ENCODE measurements at regions of chr1 and their contacts with region 1.

Region 1: GRCh38 chr1:41360993-41361753 is at the start of gene FOXO6:
- DNase-seq: peak; percentile 87 to 94 (median 91)
- ATAC-seq: peak; percentile 95
- H3K4me3 ChIP-seq: peak within 1 kb of the TSS; percentile 51
- H3K4me3 Mint-ChIP-seq: peak within 1 kb of the TSS; percentile 65 to 86 (median 80)
- H3K27ac ChIP-seq: peak within 1 kb of the TSS; percentile 25
- H3K27ac Mint-ChIP-seq: peak within 1 kb of the TSS in 7 of 9 donors; percentile 3 to 91 (median 73)
- H3K4me1 ChIP-seq: peaks cover 4 to 6% of the 10 kb centered on the region in 2 donors
- H3K4me1 Mint-ChIP-seq: peaks cover 4 to 28% (median 9%) of the 10 kb centered on the region in 7 donors
- H3K27me3 ChIP-seq: peaks cover 5 to 7% of the 10 kb centered on the region in 2 donors
- H3K27me3 Mint-ChIP-seq: peaks cover 10 to 58% (median 35%) of the 10 kb centered on the region in 5 donors
- total RNA-seq, gene FOXO6: 0.66 to 1.3 TPM in 2 of 5 experiments, not detected in the others

Region 2: GRCh38 chr1:40709100-40709801 is 651.9 kb before region 1 on chr1:
- CTCF ChIA-PET with region 1: no interaction called
- POLR2A ChIA-PET with region 1: no interaction called
- intact Hi-C with region 1: loop called in 1 of 2 experiments (anchors 10 kb)
- DNase-seq: peak; percentile 28 to 91 (median 88)
- ATAC-seq: peak; percentile 97
- H3K4me3 ChIP-seq: peak overlapping the region; percentile 68
- H3K4me3 Mint-ChIP-seq: peak overlapping the region; percentile 90 to 99 (median 94)
- H3K27ac ChIP-seq: peak overlapping the region; percentile 82
- H3K27ac Mint-ChIP-seq: peak overlapping the region; percentile 89 to 98 (median 93)
- H3K4me1 ChIP-seq: peaks cover 41 to 53% of the 10 kb centered on the region in 2 donors
- H3K4me1 Mint-ChIP-seq: peaks cover 40 to 78% (median 71%) of the 10 kb centered on the region in 7 donors
- H3K27me3 ChIP-seq: no peaks in the 10 kb centered on the region
- H3K27me3 Mint-ChIP-seq: no peaks in the 10 kb centered on the region

Region 3: DNA sequence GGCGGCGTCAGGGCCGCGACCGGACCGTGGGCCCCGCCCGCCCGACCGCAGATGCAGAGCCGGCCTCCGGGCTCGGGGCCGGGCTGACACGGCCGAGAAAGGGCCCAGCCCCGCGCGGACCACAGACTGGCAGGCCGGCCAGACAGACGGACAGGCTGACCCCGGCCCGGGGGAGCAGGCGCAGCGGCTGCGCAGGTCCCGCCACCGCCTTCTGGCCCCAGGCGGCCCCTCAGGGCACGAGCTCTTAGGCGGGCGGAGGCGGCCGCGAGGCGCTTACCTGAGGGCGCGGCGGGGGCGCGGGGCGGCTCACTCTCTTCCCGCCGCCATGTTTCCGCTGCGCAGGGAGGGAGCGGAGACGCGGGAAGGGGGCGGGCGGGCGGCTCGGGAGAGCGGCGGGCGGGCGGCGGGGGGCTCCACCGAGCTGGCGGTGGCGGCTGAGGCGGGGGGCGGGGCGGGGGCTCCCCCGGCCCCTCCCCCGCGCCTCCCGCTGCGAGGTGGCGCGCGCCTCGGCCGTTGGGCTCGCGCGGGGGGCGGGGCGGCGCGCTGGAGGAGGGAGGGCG is 119.3 kb before region 1 on chr1 and contains the start of gene SCMH1:
- CTCF ChIA-PET with region 1: no interaction called
- POLR2A ChIA-PET with region 1: no interaction called
- intact Hi-C with region 1: loop called (anchors 1 to 2 kb)
- DNase-seq: peak; percentile 31 to 67 (median 55)
- ATAC-seq: peak; percentile 77
- H3K4me3 ChIP-seq: peak within 1 kb of the TSS; percentile 57
- H3K4me3 Mint-ChIP-seq: peak within 1 kb of the TSS; percentile 76 to 92 (median 89)
- H3K27ac ChIP-seq: peak within 1 kb of the TSS; percentile 69
- H3K27ac Mint-ChIP-seq: peak within 1 kb of the TSS; percentile 75 to 94 (median 89)
- H3K4me1 ChIP-seq: peaks cover 10 to 13% of the 10 kb centered on the region in 2 donors
- H3K4me1 Mint-ChIP-seq: peaks cover 7 to 35% (median 27%) of the 10 kb centered on the region in 7 donors
- H3K27me3 ChIP-seq: no peaks in the 10 kb centered on the region
- H3K27me3 Mint-ChIP-seq: peaks cover 0 to 5% (median 0%) of the 10 kb centered on the region in 5 donors
- total RNA-seq, gene SCMH1: 16.7 to 18.6 (median 18.2) TPM

Region 4: GRCh38 chr1:41381692-41382477 is 20.7 kb after region 1 on chr1:
- CTCF ChIA-PET with region 1: no interaction called
- POLR2A ChIA-PET with region 1: no interaction called
- intact Hi-C with region 1: loop called (anchors 1 to 2 kb)
- DNase-seq: peak in 1 of 9 donors; percentile 43
- ATAC-seq: peak; percentile 79
- H3K4me3 ChIP-seq: peak overlapping the region; percentile 17
- H3K4me3 Mint-ChIP-seq: peak overlapping the region; percentile 75 to 92 (median 83)
- H3K27ac ChIP-seq: no peak overlapping the region
- H3K27ac Mint-ChIP-seq: peak overlapping the region in 2 of 9 donors; percentile 38 to 73
- H3K4me1 ChIP-seq: no peaks in the 10 kb centered on the region
- H3K4me1 Mint-ChIP-seq: peaks cover 0 to 18% (median 14%) of the 10 kb centered on the region in 7 donors
- H3K27me3 ChIP-seq: peaks cover 0 to 9% of the 10 kb centered on the region in 2 donors
- H3K27me3 Mint-ChIP-seq: peaks cover 65 to 74% (median 68%) of the 10 kb centered on the region in 5 donors

Measured in naive thymus-derived CD4-positive, alpha-beta T cell (primary cell).